ENCODE measurements at regions of chr3 and their contacts with region 1.

Region 1: DNA sequence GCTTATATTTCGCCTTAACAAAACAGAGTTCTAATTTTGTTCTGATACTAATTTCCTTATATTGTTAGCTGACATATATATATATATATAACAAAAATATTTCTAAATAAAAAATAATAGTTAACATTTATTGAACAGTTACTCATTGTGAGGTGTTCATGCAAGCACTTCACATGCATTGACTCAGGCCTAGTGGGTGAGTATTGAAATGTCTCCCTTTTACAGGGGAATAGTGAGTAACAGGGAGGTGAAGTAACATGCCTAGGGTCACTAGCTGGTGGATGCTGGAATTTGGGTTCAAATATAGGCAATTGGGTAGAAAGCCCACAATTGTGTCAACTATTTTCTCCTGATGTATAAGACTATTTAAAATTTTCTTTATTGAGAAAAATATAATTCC is 102.6 kb upstream of the ZPLD1 start:
- DNase-seq: peak; percentile 59
- ATAC-seq: peak; percentile 48; the same call in 1 of the 2 replicates
- H3K4me3 ChIP-seq: no peak overlapping the region
- H3K27ac ChIP-seq: no peak overlapping the region
- H3K4me1 ChIP-seq: peaks cover 27% of the 10 kb centered on the region
- H3K27me3 ChIP-seq: no peaks in the 10 kb centered on the region
- CTCF ChIP-seq: no peak

Region 2: GRCh38 chr3:102400766-102401165 is 68.6 kb after region 1 on chr3:
- CTCF ChIA-PET with region 1: no interaction called
- POLR2A ChIA-PET with region 1: no interaction called
- intact Hi-C with region 1: loop called (anchors 10 kb)
- DNase-seq: peak; percentile 94
- ATAC-seq: peak; percentile 94
- H3K4me3 ChIP-seq: peak overlapping the region; percentile 10; the same call in 1 of the 2 replicates
- H3K27ac ChIP-seq: peak overlapping the region; percentile 86
- H3K4me1 ChIP-seq: peaks cover 34% of the 10 kb centered on the region
- H3K27me3 ChIP-seq: no peaks in the 10 kb centered on the region
- CTCF ChIP-seq: no peak

Region 3: GRCh38 chr3:102599819-102600576 is 267.8 kb after region 1 on chr3:
- CTCF ChIA-PET with region 1: interaction called, 12 read pairs
- POLR2A ChIA-PET with region 1: no interaction called
- intact Hi-C with region 1: no loop called
- DNase-seq: no peak
- ATAC-seq: peak; percentile 72
- H3K4me3 ChIP-seq: no peak overlapping the region
- H3K27ac ChIP-seq: no peak overlapping the region
- H3K4me1 ChIP-seq: peaks cover 8% of the 10 kb centered on the region
- H3K27me3 ChIP-seq: no peaks in the 10 kb centered on the region
- CTCF ChIP-seq: no peak

Measured in PC-3 (cell line).